Mucosa of descending colon (tissue), 3 donors: ENCODE measurements at regions of chr6 and their contacts with region 1.

Region 1: DNA sequence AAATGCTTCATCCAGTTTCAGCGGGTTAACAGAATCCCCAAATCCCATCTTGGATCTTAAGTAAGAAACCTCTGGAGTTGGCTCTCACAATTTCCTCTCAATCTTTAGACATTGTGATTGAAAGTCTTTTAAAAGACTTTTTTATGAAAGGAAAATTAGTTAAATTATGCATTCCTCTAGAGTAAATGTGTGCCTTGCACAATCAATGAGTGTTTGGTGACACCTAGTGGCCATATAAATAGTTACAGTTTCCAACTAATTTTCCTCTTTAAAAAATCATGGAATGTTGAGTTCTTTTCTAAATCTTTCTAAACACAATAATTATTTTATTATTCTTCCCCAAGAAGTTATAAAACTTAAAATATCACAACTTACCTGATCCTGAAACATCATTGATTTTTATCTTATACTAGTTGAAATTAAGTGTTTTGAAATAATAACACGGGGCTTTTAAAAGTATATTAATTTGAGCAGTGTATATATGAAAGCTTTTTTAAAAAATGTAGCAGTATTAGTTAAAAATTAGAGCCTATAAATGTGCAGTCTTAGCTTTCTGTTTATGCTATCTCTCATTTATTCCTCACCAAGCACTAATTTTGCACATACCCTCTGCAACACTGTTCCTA is 66.4 kb downstream of the PKHD1 start:
- DNase-seq: no peak
- ATAC-seq: no peak
- H3K4me3 ChIP-seq: no peak overlapping the region
- H3K4me1 ChIP-seq: no peaks in the 10 kb centered on the region
- CTCF ChIP-seq: no peak

Region 2: DNA sequence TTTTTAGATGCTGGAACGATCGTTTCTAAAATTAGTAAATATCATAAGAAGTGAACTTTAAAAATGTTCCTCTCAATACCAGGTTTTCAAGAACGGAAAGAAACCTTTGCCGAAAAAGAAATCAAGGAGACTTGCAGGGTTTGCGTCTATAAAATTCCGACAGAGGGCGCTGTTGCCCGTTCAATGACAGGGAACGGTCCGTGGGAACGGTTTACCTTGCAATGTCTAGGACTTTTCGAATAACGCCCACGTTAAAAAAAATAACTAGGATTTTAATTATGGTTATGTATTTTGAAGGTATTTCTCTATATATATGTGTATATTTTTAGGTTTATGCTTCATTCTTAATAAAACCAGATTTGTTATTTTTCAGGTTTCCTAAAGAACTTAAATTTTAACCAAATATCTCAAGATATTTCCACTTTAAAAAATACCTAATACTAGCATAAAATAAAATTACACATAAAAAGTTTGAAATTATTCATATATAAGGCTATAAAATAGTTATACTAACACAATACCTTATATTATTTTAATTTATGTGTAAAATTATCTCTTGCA is 1204.9 kb before region 1 on chr6:
- intact Hi-C with region 1: loop called in 1 of 2 experiments (anchors 10 kb)
- DNase-seq: peak in 2 of 3 donors; percentile 62 to 84
- ATAC-seq: peak; percentile 69
- H3K4me3 ChIP-seq: no peak overlapping the region
- H3K4me1 ChIP-seq: no peaks in the 10 kb centered on the region
- CTCF ChIP-seq: peak; percentile 34

Region 3: GRCh38 chr6:51855310-51856082 is 165.6 kb before region 1 on chr6:
- intact Hi-C with region 1: loop called (anchors 10 kb)
- DNase-seq: peak in 1 of 3 donors; percentile 73
- ATAC-seq: peak; percentile 64
- H3K4me3 ChIP-seq: no peak overlapping the region
- H3K4me1 ChIP-seq: no peaks in the 10 kb centered on the region
- CTCF ChIP-seq: no peak